Endothelial cell of umbilical vein (primary cell): ENCODE measurements at regions of chr12 and their contacts with region 1.

Region 1: DNA sequence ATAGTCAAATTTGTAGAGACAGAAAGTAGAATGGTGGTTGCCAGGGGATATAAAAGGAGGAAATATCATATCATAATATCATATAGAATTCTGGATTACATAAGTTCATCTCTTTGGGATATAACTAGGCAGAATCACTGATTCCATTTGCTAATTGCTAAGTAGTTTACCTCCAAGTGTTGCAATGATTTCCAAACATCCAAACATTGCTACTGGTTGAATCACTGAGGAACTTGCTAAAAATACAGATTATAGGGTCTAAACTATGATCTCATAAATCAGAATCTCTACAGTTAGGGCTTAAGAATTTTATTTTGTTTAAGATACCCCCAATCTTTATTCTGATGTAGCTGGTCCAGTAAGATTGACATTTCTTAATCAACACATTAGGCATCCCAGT is 16.1 kb upstream of the TAS2R42 start:
- DNase-seq: no peak
- H3K4me3 ChIP-seq: no peak overlapping the region
- H3K27ac ChIP-seq: no peak overlapping the region
- H3K4me1 ChIP-seq: no peaks in the 10 kb centered on the region
- H3K27me3 ChIP-seq: no peaks in the 10 kb centered on the region
- CTCF ChIP-seq: no peak
- POLR2A ChIP-seq: no peak

Region 2: DNA sequence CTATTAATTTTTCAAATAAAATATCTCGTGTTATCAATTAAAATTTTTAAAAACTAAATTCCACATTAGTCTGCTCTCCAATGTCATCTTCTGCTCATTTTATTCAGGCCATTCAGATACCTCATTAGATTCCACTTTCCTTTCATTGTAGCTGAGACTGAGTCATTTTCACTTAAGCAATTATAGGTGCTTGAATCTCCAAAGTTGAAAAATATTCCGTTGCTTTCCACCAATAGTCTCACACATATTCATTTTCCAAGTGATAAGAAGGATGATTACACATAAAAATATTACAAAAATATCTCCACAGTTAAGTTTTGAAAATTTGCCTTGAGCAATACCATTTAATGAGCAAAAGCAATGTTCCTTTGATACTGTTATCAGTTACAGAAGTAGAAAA is 443.2 kb before region 1 on chr12:
- CTCF ChIA-PET with region 1: interaction called, 392 read pairs
- POLR2A ChIA-PET with region 1: no interaction called
- dilution Hi-C with region 1: no loop called
- intact Hi-C with region 1: no loop called
- DNase-seq: no peak
- H3K4me3 ChIP-seq: no peak overlapping the region
- H3K27ac ChIP-seq: no peak overlapping the region
- H3K4me1 ChIP-seq: no peaks in the 10 kb centered on the region
- H3K27me3 ChIP-seq: peaks cover 7 to 48% of the 10 kb centered on the region in 2 experiments
- CTCF ChIP-seq: no peak
- POLR2A ChIP-seq: no peak

Region 3: GRCh38 chr12:10771132-10771733 is 431.6 kb before region 1 on chr12:
- CTCF ChIA-PET with region 1: interaction called, 392 read pairs
- POLR2A ChIA-PET with region 1: no interaction called
- dilution Hi-C with region 1: no loop called
- intact Hi-C with region 1: loop called (anchors 1 kb)
- DNase-seq: peak; percentile 69
- H3K4me3 ChIP-seq: no peak overlapping the region
- H3K27ac ChIP-seq: no peak overlapping the region
- H3K4me1 ChIP-seq: no peaks in the 10 kb centered on the region
- H3K27me3 ChIP-seq: peaks cover 49 to 79% of the 10 kb centered on the region in 2 experiments
- CTCF ChIP-seq: peak; percentile 35 to 46
- POLR2A ChIP-seq: no peak

Region 4: DNA sequence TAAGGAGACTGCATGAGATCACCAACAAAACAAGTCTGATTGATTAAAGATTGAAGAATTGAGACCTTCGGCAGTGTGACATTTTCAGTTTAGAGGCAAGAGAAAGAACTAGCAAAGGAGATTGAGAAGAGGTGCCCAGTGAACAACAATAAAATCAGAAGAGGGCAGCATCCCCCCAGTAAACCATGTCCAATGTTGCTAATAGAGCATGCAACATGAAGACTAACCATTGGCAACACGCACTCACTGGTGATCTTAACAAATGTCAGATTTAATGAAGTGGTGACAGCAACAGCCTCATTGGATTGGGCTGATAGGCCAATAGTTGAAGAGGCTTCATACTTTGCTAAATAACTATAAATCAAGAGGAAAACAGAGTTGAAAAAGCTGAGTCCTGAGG is 243.0 kb before region 1 on chr12:
- CTCF ChIA-PET with region 1: interaction called, 8 read pairs
- POLR2A ChIA-PET with region 1: no interaction called
- dilution Hi-C with region 1: no loop called
- intact Hi-C with region 1: loop called (anchors 2 kb)
- DNase-seq: peak; percentile 38
- H3K4me3 ChIP-seq: no peak overlapping the region
- H3K27ac ChIP-seq: no peak overlapping the region
- H3K4me1 ChIP-seq: no peaks in the 10 kb centered on the region
- H3K27me3 ChIP-seq: no peaks in the 10 kb centered on the region
- CTCF ChIP-seq: no peak
- POLR2A ChIP-seq: no peak

Region 5: DNA sequence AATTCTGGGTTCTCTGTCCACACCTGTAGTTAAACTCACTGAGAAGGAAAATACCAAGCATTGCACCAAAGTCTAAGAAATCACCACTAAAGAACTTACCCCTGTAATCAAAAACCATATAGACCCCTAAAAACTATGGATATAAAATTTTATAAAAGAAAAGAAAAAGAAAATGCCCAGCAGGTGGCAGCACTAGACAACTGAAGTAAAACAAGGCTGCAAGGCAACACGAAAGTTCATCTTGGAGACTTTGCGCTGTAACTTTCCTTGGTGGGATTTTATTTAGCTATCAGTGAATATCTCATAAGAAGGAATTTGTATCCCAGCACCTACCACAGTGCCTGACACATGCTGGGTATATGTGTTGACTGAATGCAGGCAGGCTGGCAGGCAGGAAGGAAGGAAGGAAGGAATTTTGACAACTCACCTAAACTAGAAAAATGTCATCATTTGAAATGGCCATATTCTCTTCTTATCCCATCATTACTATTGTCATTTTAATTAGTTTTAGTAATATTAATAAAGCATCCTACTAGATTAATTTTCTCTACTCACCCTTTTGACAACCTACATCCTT is 378.5 kb after region 1 on chr12:
- CTCF ChIA-PET with region 1: no interaction called
- POLR2A ChIA-PET with region 1: no interaction called
- dilution Hi-C with region 1: no loop called
- intact Hi-C with region 1: no loop called
- DNase-seq: peak; percentile 65
- H3K4me3 ChIP-seq: no peak overlapping the region
- H3K27ac ChIP-seq: no peak overlapping the region
- H3K4me1 ChIP-seq: peaks cover 8% of the 10 kb centered on the region
- H3K27me3 ChIP-seq: no peaks in the 10 kb centered on the region
- CTCF ChIP-seq: peak in 1 of 2 donors; percentile 16
- POLR2A ChIP-seq: no peak